Sigmoid colon (tissue), 7 donors: ENCODE measurements at regions of chr2 and their contacts with region 1.

Region 1: DNA sequence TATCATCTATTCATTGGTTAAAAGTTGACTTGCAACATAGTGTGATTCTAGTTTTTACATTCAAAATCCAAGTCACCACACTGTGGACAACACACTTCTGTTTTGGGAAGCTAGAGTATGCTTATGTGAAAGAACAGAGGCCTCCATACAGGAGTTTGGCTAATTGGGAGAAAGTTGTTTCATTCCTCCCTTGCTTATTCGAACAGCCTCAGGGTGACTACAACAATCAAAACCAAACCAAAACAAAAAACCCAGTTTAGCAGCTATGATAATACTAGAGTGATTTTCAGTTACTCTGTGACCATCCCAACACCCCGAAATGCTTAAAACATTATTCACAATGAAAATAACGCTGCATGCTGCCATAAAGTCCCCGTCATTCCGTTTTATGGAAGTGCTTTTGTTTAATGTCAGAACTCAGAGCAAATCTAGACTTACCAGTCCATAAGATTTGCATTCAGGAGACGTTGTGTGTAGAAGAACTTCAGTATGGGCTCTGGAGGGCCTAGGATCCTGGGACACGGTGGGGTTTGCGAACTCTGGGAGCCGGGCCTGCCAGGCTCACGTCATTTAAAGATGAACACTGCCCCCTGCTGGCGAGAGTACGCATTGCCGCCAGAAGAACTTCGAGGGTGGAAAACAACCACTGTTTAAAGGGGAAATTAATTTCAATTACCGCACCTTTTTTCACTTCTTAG is 111.4 kb downstream of the FTCDNL1 start:
- DNase-seq: peak; percentile 81
- H3K4me3 ChIP-seq: no peak overlapping the region
- H3K27ac ChIP-seq: no peak overlapping the region
- H3K4me1 ChIP-seq: peaks cover 0 to 13% (median 11%) of the 10 kb centered on the region in 4 donors
- H3K27me3 ChIP-seq: no peaks in the 10 kb centered on the region
- CTCF ChIP-seq: peak; percentile 53 to 93 (median 84)
- EP300 ChIP-seq: no peak
- POLR2A ChIP-seq: no peak

Region 2: GRCh38 chr2:198309673-198310280 is 1429.8 kb before region 1 on chr2:
- intact Hi-C with region 1: loop called (anchors 2 kb)
- DNase-seq: no peak
- H3K4me3 ChIP-seq: no peak overlapping the region
- H3K27ac ChIP-seq: no peak overlapping the region
- H3K4me1 ChIP-seq: no peaks in the 10 kb centered on the region
- H3K27me3 ChIP-seq: no peaks in the 10 kb centered on the region
- CTCF ChIP-seq: peak in 3 of 4 experiments; percentile 56 to 84 (median 58)
- EP300 ChIP-seq: no peak
- POLR2A ChIP-seq: no peak

Region 3: DNA sequence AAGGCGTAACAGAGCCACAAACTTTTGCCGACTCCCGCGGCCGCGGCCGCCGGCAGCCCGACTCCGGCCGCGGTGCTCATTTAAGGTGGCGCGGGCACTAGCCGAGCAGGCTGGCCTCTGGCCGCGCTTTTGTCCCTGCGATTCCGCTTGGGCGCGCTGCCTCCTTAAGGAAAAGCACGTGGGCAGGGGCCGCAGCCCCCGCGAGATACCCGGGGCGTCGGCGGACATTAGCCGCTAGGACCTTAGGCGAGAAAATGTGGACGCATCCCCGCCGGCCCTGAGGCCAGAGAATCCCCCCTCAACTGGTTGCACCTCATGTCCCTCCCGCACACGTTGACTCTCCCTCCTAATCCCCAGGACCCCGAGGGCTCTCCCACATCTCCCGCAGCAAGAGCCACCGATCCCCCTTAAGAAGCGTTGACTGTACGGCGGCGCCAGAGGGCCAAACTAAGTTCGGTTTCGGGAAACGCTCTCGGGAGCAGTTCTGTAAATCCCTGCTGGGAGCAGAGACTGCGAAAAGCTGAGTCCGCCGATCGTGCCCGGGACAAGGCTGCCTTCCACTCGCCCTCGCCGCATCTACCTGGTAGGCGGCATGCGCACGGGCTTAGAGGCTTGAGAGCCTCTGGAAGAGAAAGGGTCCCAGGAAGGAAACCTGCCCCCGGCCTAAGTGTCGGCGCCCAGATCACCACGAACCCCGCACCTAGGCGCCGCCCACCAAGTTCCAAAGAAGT is 280.1 kb before region 1 on chr2:
- intact Hi-C with region 1: loop called (anchors 10 kb)
- DNase-seq: peak; percentile 96
- H3K4me3 ChIP-seq: peak overlapping the region; percentile 69 to 88 (median 78)
- H3K27ac ChIP-seq: peak overlapping the region; percentile 75 to 84 (median 76)
- H3K4me1 ChIP-seq: peaks cover 0 to 64% (median 59%) of the 10 kb centered on the region in 4 donors
- H3K27me3 ChIP-seq: peaks cover 64 to 86% (median 73%) of the 10 kb centered on the region in 3 donors
- CTCF ChIP-seq: no peak
- EP300 ChIP-seq: no peak
- POLR2A ChIP-seq: no peak

Region 4: GRCh38 chr2:199704358-199705238 is 35.0 kb before region 1 on chr2:
- intact Hi-C with region 1: loop called (anchors 5 kb)
- DNase-seq: no peak
- H3K4me3 ChIP-seq: no peak overlapping the region
- H3K27ac ChIP-seq: no peak overlapping the region
- H3K4me1 ChIP-seq: no peaks in the 10 kb centered on the region
- H3K27me3 ChIP-seq: no peaks in the 10 kb centered on the region
- CTCF ChIP-seq: peak; percentile 44 to 60 (median 48)
- EP300 ChIP-seq: no peak
- POLR2A ChIP-seq: no peak